ENCODE measurements at regions of chr6 and their contacts with region 1.

Region 1: GRCh38 chr6:136037876-136038460 is 186.5 kb downstream of the PDE7B start:
- DNase-seq: no peak
- H3K4me3 ChIP-seq: peak overlapping the region; percentile 44 to 47 (median 46)
- H3K27ac ChIP-seq: peak overlapping the region; percentile 65 to 78 (median 74)
- H3K4me1 ChIP-seq: peaks cover 24 to 79% (median 60%) of the 10 kb centered on the region in 4 donors
- H3K27me3 ChIP-seq: no peaks in the 10 kb centered on the region
- CTCF ChIP-seq: peak; percentile 8 to 42 (median 17)
- EP300 ChIP-seq: no peak
- POLR2A ChIP-seq: no peak

Region 2: DNA sequence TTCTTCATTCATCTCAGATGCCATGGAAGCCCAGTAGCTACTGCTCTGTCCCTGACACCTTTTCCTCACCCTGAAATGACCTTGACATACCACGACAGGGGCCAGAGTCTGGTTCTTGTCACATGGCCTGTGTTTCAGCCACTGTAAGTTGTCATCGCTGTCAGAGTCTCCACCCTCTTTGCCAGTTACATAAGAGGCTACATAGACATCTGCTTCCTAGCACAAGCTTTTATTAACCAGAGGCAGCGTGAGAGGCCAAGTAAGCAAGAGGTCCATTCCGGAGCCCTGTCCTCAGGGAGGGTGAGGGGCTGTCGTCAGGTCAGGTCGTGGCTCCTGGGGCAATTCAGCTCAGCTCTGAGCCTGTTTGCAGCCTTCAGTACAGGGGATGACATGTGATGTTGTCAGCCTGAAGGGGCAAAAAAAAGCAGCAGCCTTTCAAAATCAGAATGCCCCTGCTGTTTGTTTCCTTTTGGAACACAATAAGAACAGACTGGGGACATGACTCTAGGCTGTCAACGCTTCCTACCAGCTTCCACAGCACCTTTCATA is 65.9 kb after region 1 on chr6:
- intact Hi-C with region 1: loop called (anchors 10 kb)
- DNase-seq: no peak
- H3K4me3 ChIP-seq: peak overlapping the region in 3 of 4 donors; percentile 6 to 24 (median 8)
- H3K27ac ChIP-seq: peak overlapping the region; percentile 53 to 89 (median 80)
- H3K4me1 ChIP-seq: peaks cover 36 to 69% (median 56%) of the 10 kb centered on the region in 4 donors
- H3K27me3 ChIP-seq: no peaks in the 10 kb centered on the region
- CTCF ChIP-seq: no peak
- EP300 ChIP-seq: peak; percentile 9
- POLR2A ChIP-seq: no peak

Region 3: GRCh38 chr6:136378886-136379285 is 340.9 kb after region 1 on chr6:
- intact Hi-C with region 1: no loop called
- DNase-seq: no peak
- H3K4me3 ChIP-seq: no peak overlapping the region
- H3K27ac ChIP-seq: no peak overlapping the region
- H3K4me1 ChIP-seq: no peaks in the 10 kb centered on the region
- H3K27me3 ChIP-seq: no peaks in the 10 kb centered on the region
- CTCF ChIP-seq: no peak
- EP300 ChIP-seq: no peak
- POLR2A ChIP-seq: no peak